Pancreas (tissue), 10 donors: ENCODE measurements at regions of chr12 and their contacts with region 1.

Region 1: GRCh38 chr12:3034067-3034750 is 43.0 kb upstream of the TSPAN9 start:
- DNase-seq: peak; percentile 59 to 79 (median 72)
- ATAC-seq: peak; percentile 57 to 84 (median 78)
- H3K4me3 ChIP-seq: no peak overlapping the region
- H3K27ac ChIP-seq: no peak overlapping the region
- H3K4me1 ChIP-seq: peaks cover 0 to 18% (median 11%) of the 10 kb centered on the region in 3 donors
- H3K27me3 ChIP-seq: no peaks in the 10 kb centered on the region
- CTCF ChIP-seq: peak; percentile 25 to 61 (median 57)

Region 2: GRCh38 chr12:2853626-2854025 is 180.6 kb before region 1 on chr12:
- intact Hi-C with region 1: loop called in 1 of 3 experiments (anchors 10 kb)
- DNase-seq: peak; percentile 69 to 92 (median 86)
- ATAC-seq: peak; percentile 72 to 91 (median 86)
- H3K4me3 ChIP-seq: no peak overlapping the region
- H3K27ac ChIP-seq: no peak overlapping the region
- H3K4me1 ChIP-seq: peaks cover 4 to 7% (median 5%) of the 10 kb centered on the region in 3 donors
- H3K27me3 ChIP-seq: no peaks in the 10 kb centered on the region
- CTCF ChIP-seq: peak; percentile 69 to 85 (median 82)

Region 3: GRCh38 chr12:2884810-2885209 is 149.4 kb before region 1 on chr12:
- intact Hi-C with region 1: loop called in 1 of 3 experiments (anchors 5 kb)
- DNase-seq: no peak
- ATAC-seq: peak in 1 of 4 donors; percentile 9
- H3K4me3 ChIP-seq: no peak overlapping the region
- H3K27ac ChIP-seq: no peak overlapping the region
- H3K4me1 ChIP-seq: no peaks in the 10 kb centered on the region
- H3K27me3 ChIP-seq: no peaks in the 10 kb centered on the region
- CTCF ChIP-seq: no peak

Region 4: DNA sequence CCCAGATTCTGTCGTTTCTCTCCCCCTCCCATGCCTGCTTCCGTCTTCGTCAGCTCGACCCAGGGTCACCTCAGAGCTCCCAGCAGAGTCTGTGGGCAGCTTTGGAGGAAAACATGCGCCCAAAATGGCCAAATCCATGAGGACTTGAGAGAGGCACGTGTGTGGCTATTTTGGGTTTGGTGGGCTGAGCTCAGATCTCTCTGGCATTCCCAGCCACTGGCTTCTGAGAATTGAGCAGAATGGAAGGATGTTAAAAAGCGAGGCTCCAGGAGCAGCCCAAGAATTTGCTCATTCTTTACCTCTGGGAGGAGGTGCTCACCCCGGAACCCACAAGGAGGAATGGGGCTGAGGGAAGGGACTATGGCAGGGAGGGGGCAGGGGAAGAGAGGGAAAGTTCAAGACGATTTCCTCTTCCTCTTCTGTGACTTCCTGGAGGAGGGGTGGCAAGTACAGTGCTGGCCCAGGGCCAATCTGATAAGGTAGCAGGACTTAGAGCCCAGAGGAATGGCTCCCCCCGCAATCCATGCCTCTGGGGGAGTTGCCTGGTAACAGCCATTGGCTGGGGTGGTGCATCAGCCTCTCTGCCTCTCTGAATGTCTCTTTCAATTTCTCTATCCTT is 63.1 kb after region 1 on chr12:
- intact Hi-C with region 1: no loop called
- DNase-seq: peak in 3 of 6 donors; percentile 55 to 73 (median 56)
- ATAC-seq: peak; percentile 62 to 75 (median 72)
- H3K4me3 ChIP-seq: no peak overlapping the region
- H3K27ac ChIP-seq: peak overlapping the region in 2 of 4 donors; percentile 18 to 33
- H3K4me1 ChIP-seq: no peaks in the 10 kb centered on the region
- H3K27me3 ChIP-seq: no peaks in the 10 kb centered on the region
- CTCF ChIP-seq: no peak

Region 5: DNA sequence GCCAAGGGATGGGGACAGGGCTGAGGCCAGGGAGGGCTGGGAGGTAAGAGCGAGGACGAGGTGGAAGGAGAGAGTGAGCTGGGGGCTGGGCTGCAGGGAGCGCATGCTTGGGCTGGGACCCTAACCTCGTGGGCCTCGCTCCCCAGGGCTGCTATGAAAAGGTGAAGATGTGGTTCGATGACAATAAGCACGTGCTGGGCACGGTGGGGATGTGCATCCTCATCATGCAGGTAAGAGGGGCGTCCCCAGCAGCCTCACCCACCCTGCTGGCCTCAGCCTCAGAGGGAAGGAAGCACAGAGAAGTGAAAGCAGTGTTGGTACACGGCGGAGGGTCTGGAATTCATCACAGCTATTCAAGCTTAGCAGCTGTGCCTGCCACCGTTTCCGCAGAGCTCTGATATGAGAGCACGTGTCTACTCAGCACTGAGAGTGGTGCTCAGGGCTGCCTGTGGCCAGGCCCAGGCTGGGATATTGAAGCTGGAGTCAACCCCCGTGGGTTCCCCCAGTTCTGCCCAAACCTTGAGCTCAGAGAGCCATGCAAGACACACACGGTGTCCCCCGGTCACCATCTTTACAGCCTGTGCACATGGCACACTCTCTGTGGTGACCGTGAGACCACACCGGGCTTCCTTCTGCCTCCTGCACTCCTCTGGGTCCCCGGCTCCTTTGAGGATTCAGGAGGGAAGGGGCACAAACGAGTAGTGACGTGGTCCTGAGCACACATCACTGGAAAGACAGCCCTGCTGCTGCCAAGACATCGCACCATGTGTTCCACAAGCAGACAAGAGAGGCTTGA is 247.6 kb after region 1 on chr12:
- intact Hi-C with region 1: no loop called
- DNase-seq: no peak
- ATAC-seq: no peak
- H3K4me3 ChIP-seq: no peak overlapping the region
- H3K27ac ChIP-seq: no peak overlapping the region
- H3K4me1 ChIP-seq: no peaks in the 10 kb centered on the region
- H3K27me3 ChIP-seq: no peaks in the 10 kb centered on the region
- CTCF ChIP-seq: no peak